ENCODE measurements at regions of chrX and their contacts with region 1.

Region 1: DNA sequence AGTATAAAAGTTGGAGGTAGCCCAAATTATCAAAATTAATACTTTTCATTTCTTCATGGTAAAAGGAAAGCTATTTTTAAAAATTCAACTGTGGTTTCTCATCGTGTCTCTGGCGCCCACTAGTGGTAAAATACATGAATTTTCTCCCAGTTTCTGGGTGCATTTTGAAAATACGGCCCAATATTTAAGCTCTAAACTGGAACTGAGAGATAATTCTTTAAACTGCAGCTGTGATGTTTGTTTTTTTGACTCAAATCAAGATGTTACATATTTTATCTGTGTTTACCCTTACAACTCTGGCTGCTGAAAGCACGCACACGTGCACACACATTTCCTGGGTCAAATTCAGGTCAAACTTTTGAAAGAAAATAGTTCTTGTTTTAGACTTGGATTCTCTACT is 123.9 kb upstream of the ACSL4 start:
- DNase-seq: peak; percentile 40

Region 2: GRCh38 chrX:109714340-109714958 is 142.5 kb before region 1 on chrX:
- CTCF ChIA-PET with region 1: interaction called, 83 read pairs
- POLR2A ChIA-PET with region 1: interaction called, 3 read pairs
- DNase-seq: no peak

Region 3: GRCh38 chrX:109826954-109827708 is 29.8 kb before region 1 on chrX:
- CTCF ChIA-PET with region 1: interaction called, 11 read pairs
- POLR2A ChIA-PET with region 1: no interaction called
- DNase-seq: no peak

Region 4: GRCh38 chrX:109840585-109840984 is 16.4 kb before region 1 on chrX:
- CTCF ChIA-PET with region 1: interaction called, 20 read pairs
- POLR2A ChIA-PET with region 1: no interaction called
- DNase-seq: no peak

Region 5: GRCh38 chrX:110002300-110003166 is 145.6 kb after region 1 on chrX and contains the start of gene TMEM164:
- CTCF ChIA-PET with region 1: no interaction called
- POLR2A ChIA-PET with region 1: no interaction called
- DNase-seq: peak; percentile 79

Measured in HEK293T (cell line).